ENCODE measurements at regions of chr1 and their contacts with region 1.

Region 1: GRCh38 chr1:204446370-204447111 is 34.9 kb upstream of the PPP1R15B start:
- DNase-seq: peak; percentile 86
- H3K4me3 Mint-ChIP-seq: no peak overlapping the region
- H3K27ac Mint-ChIP-seq: peak overlapping the region; percentile 76
- H3K4me1 Mint-ChIP-seq: peaks cover 77% of the 10 kb centered on the region
- H3K27me3 Mint-ChIP-seq: no peaks in the 10 kb centered on the region

Region 2: DNA sequence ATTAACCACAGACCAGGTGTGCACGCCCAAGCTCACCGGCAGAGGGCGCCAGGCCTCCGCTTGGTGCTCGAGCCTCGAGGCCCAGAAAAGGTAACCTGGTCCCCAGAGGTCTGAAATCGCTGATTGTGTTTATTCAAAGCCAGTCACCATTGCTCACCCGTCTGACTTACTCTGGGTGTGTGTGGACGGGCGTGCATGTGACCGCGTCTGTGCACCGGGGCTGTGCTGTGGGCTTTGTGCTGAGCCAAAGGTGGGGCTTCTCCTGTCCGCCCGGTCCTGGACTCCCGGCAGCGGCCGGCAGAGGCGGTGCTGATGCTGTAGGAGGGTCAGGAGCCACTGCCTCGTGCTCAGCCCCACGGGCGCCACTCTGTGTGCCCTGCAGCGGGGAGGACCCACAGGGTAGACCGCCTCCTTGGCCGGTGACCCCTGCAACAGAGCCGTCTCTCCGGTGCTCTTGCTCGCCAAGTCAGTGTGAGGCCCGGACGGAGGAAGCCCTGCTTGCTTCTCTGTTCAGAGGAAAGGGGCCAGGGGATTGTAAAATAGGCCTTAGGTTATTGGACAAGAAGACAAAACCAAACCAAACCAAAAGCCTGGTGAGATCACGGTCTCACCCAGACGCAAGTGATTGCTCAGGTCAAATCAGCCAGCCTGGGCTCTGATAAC is 1173.2 kb before region 1 on chr1:
- CTCF ChIA-PET with region 1: no interaction called
- POLR2A ChIA-PET with region 1: no interaction called
- intact Hi-C with region 1: no loop called
- DNase-seq: peak; percentile 95
- H3K4me3 Mint-ChIP-seq: peak overlapping the region; percentile 63
- H3K27ac Mint-ChIP-seq: peak overlapping the region; percentile 72
- H3K4me1 Mint-ChIP-seq: peaks cover 64% of the 10 kb centered on the region
- H3K27me3 Mint-ChIP-seq: no peaks in the 10 kb centered on the region

Region 3: GRCh38 chr1:204411451-204412204 is 34.9 kb before region 1 on chr1 and contains the start of gene PPP1R15B:
- CTCF ChIA-PET with region 1: interaction called, 10 read pairs
- POLR2A ChIA-PET with region 1: no interaction called
- intact Hi-C with region 1: loop called (anchors 5 kb)
- DNase-seq: peak; percentile 99
- H3K4me3 Mint-ChIP-seq: peak within 1 kb of the TSS; percentile 99
- H3K27ac Mint-ChIP-seq: peak within 1 kb of the TSS; percentile 98
- H3K4me1 Mint-ChIP-seq: peaks cover 12% of the 10 kb centered on the region
- H3K27me3 Mint-ChIP-seq: no peaks in the 10 kb centered on the region
- total RNA-seq, gene PPP1R15B: 54.9 to 57.1 TPM

Region 4: GRCh38 chr1:204465546-204466415 is 19.2 kb after region 1 on chr1:
- CTCF ChIA-PET with region 1: interaction called, 41 read pairs
- POLR2A ChIA-PET with region 1: no interaction called
- intact Hi-C with region 1: no loop called
- DNase-seq: no peak
- H3K4me3 Mint-ChIP-seq: no peak overlapping the region
- H3K27ac Mint-ChIP-seq: peak overlapping the region; percentile 39
- H3K4me1 Mint-ChIP-seq: peaks cover 60% of the 10 kb centered on the region
- H3K27me3 Mint-ChIP-seq: no peaks in the 10 kb centered on the region

Region 5: GRCh38 chr1:204480515-204480914 is 34.0 kb after region 1 on chr1:
- CTCF ChIA-PET with region 1: interaction called, 25 read pairs
- POLR2A ChIA-PET with region 1: no interaction called
- intact Hi-C with region 1: no loop called
- DNase-seq: no peak
- H3K4me3 Mint-ChIP-seq: no peak overlapping the region
- H3K27ac Mint-ChIP-seq: no peak overlapping the region
- H3K4me1 Mint-ChIP-seq: peaks cover 65% of the 10 kb centered on the region
- H3K27me3 Mint-ChIP-seq: no peaks in the 10 kb centered on the region

Region 6: DNA sequence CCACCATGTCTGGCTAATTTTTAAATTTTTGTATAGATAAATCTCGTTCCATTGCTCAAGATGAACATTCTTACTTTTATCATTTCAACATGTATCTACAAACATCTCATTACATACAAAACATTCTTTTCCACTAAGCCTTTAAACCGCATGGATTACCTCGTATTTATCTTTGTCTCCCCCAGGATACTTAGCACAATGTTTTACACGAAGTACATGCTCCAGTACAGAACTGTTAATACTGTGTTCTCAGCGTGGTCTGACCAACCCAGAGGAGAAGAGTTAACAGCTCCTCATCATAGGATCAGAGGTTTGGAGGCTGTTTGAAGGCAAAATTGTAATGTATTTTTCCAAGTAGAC is 40.7 kb after region 1 on chr1:
- CTCF ChIA-PET with region 1: interaction called, 1,224 read pairs
- POLR2A ChIA-PET with region 1: no interaction called
- intact Hi-C with region 1: no loop called
- DNase-seq: no peak
- H3K4me3 Mint-ChIP-seq: no peak overlapping the region
- H3K27ac Mint-ChIP-seq: no peak overlapping the region
- H3K4me1 Mint-ChIP-seq: peaks cover 64% of the 10 kb centered on the region
- H3K27me3 Mint-ChIP-seq: no peaks in the 10 kb centered on the region

Region 7: GRCh38 chr1:204544321-204544720 is 97.8 kb after region 1 on chr1:
- CTCF ChIA-PET with region 1: no interaction called
- POLR2A ChIA-PET with region 1: no interaction called
- intact Hi-C with region 1: no loop called
- DNase-seq: no peak
- H3K4me3 Mint-ChIP-seq: no peak overlapping the region
- H3K27ac Mint-ChIP-seq: peak overlapping the region; percentile 68
- H3K4me1 Mint-ChIP-seq: peaks cover 43% of the 10 kb centered on the region
- H3K27me3 Mint-ChIP-seq: no peaks in the 10 kb centered on the region

Measured in activated CD4-positive, alpha-beta memory T cell treated with anti-CD3 and anti-CD28 coated beads for 36 hours (primary cell).